Activated CD8-positive, alpha-beta T cell treated with anti-CD3 and anti-CD28 coated beads for 36 hours (primary cell): ENCODE measurements at regions of chr18 and their contacts with region 1.

Region 1: GRCh38 chr18:78984941-78985784 is 5.5 kb downstream of the SALL3 start:
- DNase-seq: peak; percentile 55
- ATAC-seq: peak; percentile 68
- H3K4me3 Mint-ChIP-seq: no peak overlapping the region
- H3K27ac Mint-ChIP-seq: no peak overlapping the region
- H3K4me1 Mint-ChIP-seq: peaks cover 6% of the 10 kb centered on the region
- H3K27me3 Mint-ChIP-seq: peaks cover 59% of the 10 kb centered on the region
- CTCF ChIP-seq: no peak

Region 2: GRCh38 chr18:78875268-78875997 is 109.7 kb before region 1 on chr18:
- CTCF ChIA-PET with region 1: interaction called, 21 read pairs
- POLR2A ChIA-PET with region 1: interaction called, 7 read pairs
- intact Hi-C with region 1: loop called (anchors 5 kb)
- DNase-seq: peak; percentile 56
- ATAC-seq: no peak
- H3K4me3 Mint-ChIP-seq: no peak overlapping the region
- H3K27ac Mint-ChIP-seq: no peak overlapping the region
- H3K4me1 Mint-ChIP-seq: no peaks in the 10 kb centered on the region
- H3K27me3 Mint-ChIP-seq: peaks cover 14% of the 10 kb centered on the region
- CTCF ChIP-seq: peak; percentile 57

Region 3: GRCh38 chr18:78974115-78975018 is 10.8 kb before region 1 on chr18:
- CTCF ChIA-PET with region 1: interaction called, 12 read pairs
- POLR2A ChIA-PET with region 1: no interaction called
- intact Hi-C with region 1: no loop called
- DNase-seq: no peak
- ATAC-seq: no peak
- H3K4me3 Mint-ChIP-seq: no peak overlapping the region
- H3K27ac Mint-ChIP-seq: no peak overlapping the region
- H3K4me1 Mint-ChIP-seq: peaks cover 10% of the 10 kb centered on the region
- H3K27me3 Mint-ChIP-seq: peaks cover 70% of the 10 kb centered on the region
- CTCF ChIP-seq: no peak